CD8-positive, alpha-beta T cell (primary cell): ENCODE measurements at regions of chr5 and their contacts with region 1.

Region 1: GRCh38 chr5:131270809-131271208 is 7.0 kb downstream of the CDC42SE2 start:
- DNase-seq: peak in 1 of 9 experiments; percentile 15
- ATAC-seq: no peak
- H3K4me3 ChIP-seq: peak overlapping the region; percentile 2 to 39
- H3K4me3 Mint-ChIP-seq: peak overlapping the region; percentile 82
- H3K27ac ChIP-seq: peak overlapping the region; percentile 32 to 93
- H3K27ac Mint-ChIP-seq: peak overlapping the region; percentile 93
- H3K4me1 ChIP-seq: peaks cover 68% of the 10 kb centered on the region
- H3K4me1 Mint-ChIP-seq: peaks cover 71% of the 10 kb centered on the region
- H3K27me3 ChIP-seq: no peaks in the 10 kb centered on the region
- H3K27me3 Mint-ChIP-seq: no peaks in the 10 kb centered on the region
- CTCF ChIP-seq: no peak

Region 2: GRCh38 chr5:131186561-131187256 is 84.1 kb before region 1 on chr5:
- CTCF ChIA-PET with region 1: no interaction called
- POLR2A ChIA-PET with region 1: no interaction called
- intact Hi-C with region 1: no loop called
- DNase-seq: no peak
- ATAC-seq: no peak
- H3K4me3 ChIP-seq: no peak overlapping the region
- H3K4me3 Mint-ChIP-seq: no peak overlapping the region
- H3K27ac ChIP-seq: no peak overlapping the region
- H3K27ac Mint-ChIP-seq: no peak overlapping the region
- H3K4me1 ChIP-seq: no peaks in the 10 kb centered on the region
- H3K4me1 Mint-ChIP-seq: peaks cover 8% of the 10 kb centered on the region
- H3K27me3 ChIP-seq: no peaks in the 10 kb centered on the region
- H3K27me3 Mint-ChIP-seq: no peaks in the 10 kb centered on the region
- CTCF ChIP-seq: no peak

Region 3: DNA sequence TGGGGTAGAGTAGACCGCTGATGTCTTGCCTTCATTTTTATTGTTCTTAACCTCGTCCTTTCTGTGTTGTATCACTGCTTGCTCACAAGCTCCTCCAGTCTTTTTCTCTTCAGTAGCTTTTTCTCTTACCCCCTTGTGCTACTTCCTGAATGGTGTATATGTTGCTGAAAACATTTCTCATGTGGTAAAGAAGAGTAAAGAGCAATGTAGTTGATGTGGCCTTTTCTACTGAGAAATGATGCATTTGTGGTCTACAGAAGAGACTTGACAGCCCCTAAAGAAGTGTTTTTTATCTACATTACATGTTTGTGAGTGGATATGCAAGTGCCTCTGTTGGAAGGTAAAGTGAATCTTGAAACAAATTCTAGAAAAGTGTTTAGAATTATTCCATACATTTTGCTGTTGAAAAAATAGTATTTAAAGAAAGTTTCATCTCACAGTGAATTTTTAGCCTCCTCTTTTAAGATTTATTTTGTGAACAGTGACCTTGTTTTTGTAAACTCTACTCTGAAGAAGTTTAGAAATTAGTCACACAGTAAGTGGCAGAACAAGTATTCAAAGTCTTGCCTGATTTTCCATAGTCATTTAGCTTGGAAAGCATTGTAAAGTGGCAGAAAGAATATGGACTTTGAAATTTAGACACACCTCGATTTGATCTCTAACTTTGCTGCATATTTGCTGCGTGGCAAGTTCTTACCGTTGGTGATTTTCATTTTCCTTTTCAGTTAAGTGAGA is 10.5 kb after region 1 on chr5:
- CTCF ChIA-PET with region 1: interaction called, 12 read pairs
- POLR2A ChIA-PET with region 1: interaction called, 239 read pairs
- intact Hi-C with region 1: loop called in 1 of 2 experiments (anchors 2 kb)
- DNase-seq: peak in 2 of 9 experiments; percentile 83 to 91
- ATAC-seq: peak; percentile 81
- H3K4me3 ChIP-seq: peak overlapping the region; percentile 32 to 47
- H3K4me3 Mint-ChIP-seq: peak overlapping the region; percentile 81
- H3K27ac ChIP-seq: peak overlapping the region; percentile 75 to 86
- H3K27ac Mint-ChIP-seq: peak overlapping the region; percentile 94
- H3K4me1 ChIP-seq: peaks cover 87% of the 10 kb centered on the region
- H3K4me1 Mint-ChIP-seq: peaks cover 78% of the 10 kb centered on the region
- H3K27me3 ChIP-seq: no peaks in the 10 kb centered on the region
- H3K27me3 Mint-ChIP-seq: no peaks in the 10 kb centered on the region
- CTCF ChIP-seq: no peak

Region 4: DNA sequence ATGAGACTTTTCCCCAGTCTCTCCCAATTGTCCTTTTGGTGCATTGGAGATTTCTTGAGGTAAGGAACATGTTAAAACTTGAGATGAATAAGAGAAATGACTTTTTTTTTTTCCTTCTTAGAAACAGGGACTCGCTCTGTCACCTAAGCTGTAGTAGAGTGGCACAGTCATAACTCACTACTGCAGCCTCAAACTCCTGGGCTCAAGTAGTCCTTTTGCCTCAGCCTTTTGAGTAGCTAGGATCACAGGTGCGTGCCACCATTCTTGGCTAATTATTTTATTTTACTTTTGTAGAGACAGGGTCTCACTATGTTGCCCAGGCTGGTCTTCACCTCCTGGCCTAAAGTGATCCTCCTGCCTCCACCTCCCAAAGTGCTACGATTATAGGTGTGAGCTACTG is 18.9 kb after region 1 on chr5:
- CTCF ChIA-PET with region 1: interaction called, 12 read pairs
- POLR2A ChIA-PET with region 1: interaction called, 239 read pairs
- intact Hi-C with region 1: no loop called
- DNase-seq: peak in 2 of 9 experiments; percentile 34 to 57
- ATAC-seq: peak; percentile 52
- H3K4me3 ChIP-seq: peak overlapping the region; percentile 4 to 42
- H3K4me3 Mint-ChIP-seq: peak overlapping the region; percentile 76
- H3K27ac ChIP-seq: peak overlapping the region; percentile 21 to 79
- H3K27ac Mint-ChIP-seq: peak overlapping the region; percentile 91
- H3K4me1 ChIP-seq: peaks cover 87% of the 10 kb centered on the region
- H3K4me1 Mint-ChIP-seq: peaks cover 72% of the 10 kb centered on the region
- H3K27me3 ChIP-seq: no peaks in the 10 kb centered on the region
- H3K27me3 Mint-ChIP-seq: no peaks in the 10 kb centered on the region
- CTCF ChIP-seq: no peak